HEK293T (cell line): ENCODE measurements at regions of chr11 and their contacts with region 1.

Region 1: GRCh38 chr11:43920598-43921419 is 21.6 kb upstream of the C11orf96 start:
- DNase-seq: no peak

Region 2: GRCh38 chr11:43942912-43943356 is 22.1 kb after region 1 on chr11:
- CTCF ChIA-PET with region 1: interaction called, 7 read pairs
- POLR2A ChIA-PET with region 1: interaction called, 30 read pairs
- DNase-seq: peak; percentile 45